KBM-7 (cell line): ENCODE measurements at regions of chr12 and their contacts with region 1.

Region 1: DNA sequence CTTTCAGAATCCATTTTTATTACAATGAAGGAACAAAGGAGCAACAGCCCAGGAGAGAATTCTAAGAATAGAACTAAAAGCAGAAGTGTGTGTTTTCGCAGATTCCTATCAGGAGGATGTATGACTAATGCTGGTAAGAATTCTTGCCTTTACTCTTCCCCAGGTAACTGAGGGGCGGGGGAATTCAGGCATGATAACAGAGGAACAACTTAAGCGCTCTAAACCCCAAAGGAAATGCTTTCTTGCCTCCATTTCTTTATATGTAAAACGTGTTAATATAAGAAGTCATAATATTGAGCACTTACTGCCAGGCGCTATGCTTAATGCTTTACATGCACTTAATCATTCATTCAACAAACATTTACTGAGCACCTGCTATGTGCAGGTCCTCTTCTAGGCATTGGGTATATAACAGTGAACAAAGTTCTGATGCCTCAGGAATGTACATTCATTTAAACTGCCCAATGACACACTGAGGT is 4.5 kb downstream of the HCAR1 start:
- DNase-seq: peak; percentile 89

Region 2: DNA sequence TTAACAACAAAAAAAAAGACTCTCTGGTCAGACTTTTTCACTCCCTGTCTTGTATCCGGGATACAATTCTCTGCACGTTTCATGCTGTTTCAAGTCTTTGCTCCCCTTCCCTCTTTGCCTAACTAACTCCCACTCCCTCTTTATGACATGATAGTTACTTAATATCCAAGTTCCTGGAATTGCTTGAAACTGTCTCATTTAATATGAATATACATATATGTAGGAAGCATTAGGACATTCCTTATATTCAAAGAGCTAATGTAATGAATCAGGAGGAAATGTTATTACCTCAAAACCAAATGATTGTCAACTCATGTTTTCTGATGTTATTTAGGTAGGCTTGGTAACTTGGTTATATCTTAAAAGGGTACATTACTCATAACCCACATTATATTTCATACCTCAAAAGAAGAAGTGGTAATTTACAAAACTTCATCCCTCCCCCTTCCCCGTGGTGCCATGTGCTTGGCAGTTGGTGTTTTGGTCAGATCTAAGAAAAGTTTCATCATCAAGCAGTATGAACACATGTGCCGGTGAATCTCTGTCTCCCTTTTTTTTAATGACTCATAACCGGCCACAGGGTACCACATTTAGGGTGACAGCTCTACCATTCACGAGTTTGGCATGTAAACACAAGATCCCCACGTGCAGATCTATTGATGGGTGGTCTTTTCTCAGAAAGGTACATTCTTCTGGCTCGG is 79.5 kb before region 1 on chr12:
- in situ Hi-C with region 1: loop called (anchors 25 kb)
- DNase-seq: peak; percentile 96